ENCODE measurements at regions of chr12 and their contacts with region 1.

Region 1: DNA sequence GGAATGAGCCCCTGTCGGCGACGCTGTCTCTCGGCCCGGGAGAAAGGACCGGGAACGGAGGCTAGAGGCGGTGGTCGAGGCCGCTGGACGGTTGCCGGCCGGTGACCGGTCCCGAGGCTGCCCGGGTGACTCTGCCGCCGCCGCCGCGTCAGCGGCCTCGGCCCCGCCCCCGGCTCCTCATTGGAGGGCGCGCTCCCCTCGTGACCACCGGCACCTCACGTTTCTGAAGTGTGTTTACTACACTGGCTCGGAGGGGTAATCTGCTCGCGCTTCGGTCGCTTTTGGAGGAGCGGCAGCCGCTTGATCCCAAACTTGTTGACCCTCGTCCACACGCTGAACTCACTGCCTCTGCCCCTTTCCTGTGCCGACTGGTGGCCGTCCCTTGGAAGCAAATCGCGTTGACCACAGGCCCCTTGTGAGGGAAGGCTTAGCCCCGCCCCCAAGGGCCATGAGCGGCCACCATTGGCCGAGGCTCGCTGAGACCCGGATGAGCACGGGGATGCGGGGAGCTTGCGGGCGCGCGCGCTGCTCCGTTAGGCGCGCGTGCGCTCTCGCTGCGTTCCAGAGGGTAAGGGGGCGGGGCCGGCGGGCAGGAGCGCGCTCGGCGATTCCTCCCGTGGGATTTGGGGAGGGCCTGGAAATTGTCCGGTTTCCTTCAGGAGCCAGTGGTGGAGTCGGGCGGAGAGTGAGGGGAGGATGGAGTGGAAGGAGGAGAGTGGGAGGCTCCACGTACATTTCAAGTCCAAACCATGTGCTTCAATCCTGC is at the start of gene CRY1:
- DNase-seq: peak; percentile 94 to 96
- H3K4me3 ChIP-seq: peak within 1 kb of the TSS; percentile 49
- H3K4me3 Mint-ChIP-seq: no peak within 1 kb of the TSS
- H3K27ac Mint-ChIP-seq: no peak within 1 kb of the TSS
- H3K4me1 ChIP-seq: peaks cover 11% of the 10 kb centered on the region; the same call in 1 of the 2 replicates
- H3K4me1 Mint-ChIP-seq: peaks cover 7% of the 10 kb centered on the region
- H3K27me3 ChIP-seq: no peaks in the 10 kb centered on the region
- H3K27me3 Mint-ChIP-seq: no peaks in the 10 kb centered on the region
- CTCF ChIP-seq: no peak
- total RNA-seq, gene CRY1: 19.4 and 22.2 TPM in 2 replicates

Region 2: DNA sequence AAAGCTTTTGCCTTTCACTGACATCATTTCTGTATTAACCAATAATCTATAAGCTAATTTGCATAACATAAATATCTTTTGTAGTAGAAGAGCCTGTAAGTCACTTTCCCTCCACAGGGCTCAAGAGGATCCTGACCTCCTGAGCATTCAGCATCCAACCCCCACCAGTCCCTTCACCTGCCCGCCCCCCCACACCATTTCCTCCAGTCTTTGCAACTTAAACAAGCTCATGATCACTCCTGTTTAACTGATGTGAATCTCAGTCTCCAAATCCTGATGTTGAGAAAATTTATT is 11.8 kb after region 1 on chr12:
- CTCF ChIA-PET with region 1: interaction called, 12 read pairs
- POLR2A ChIA-PET with region 1: interaction called, 3 read pairs
- intact Hi-C with region 1: loop called (anchors 1 kb)
- DNase-seq: no peak
- H3K4me3 ChIP-seq: no peak overlapping the region
- H3K4me3 Mint-ChIP-seq: no peak overlapping the region
- H3K27ac Mint-ChIP-seq: no peak overlapping the region
- H3K4me1 ChIP-seq: peaks cover 5% of the 10 kb centered on the region; the same call in 1 of the 2 replicates
- H3K4me1 Mint-ChIP-seq: no peaks in the 10 kb centered on the region
- H3K27me3 ChIP-seq: no peaks in the 10 kb centered on the region
- H3K27me3 Mint-ChIP-seq: peaks cover 10% of the 10 kb centered on the region
- CTCF ChIP-seq: no peak

Region 3: GRCh38 chr12:107859367-107859766 is 765.8 kb after region 1 on chr12:
- CTCF ChIA-PET with region 1: no interaction called
- POLR2A ChIA-PET with region 1: no interaction called
- intact Hi-C with region 1: no loop called
- DNase-seq: no peak
- H3K4me3 ChIP-seq: no peak overlapping the region
- H3K4me3 Mint-ChIP-seq: no peak overlapping the region
- H3K27ac Mint-ChIP-seq: no peak overlapping the region
- H3K4me1 ChIP-seq: no peaks in the 10 kb centered on the region
- H3K4me1 Mint-ChIP-seq: no peaks in the 10 kb centered on the region
- H3K27me3 ChIP-seq: no peaks in the 10 kb centered on the region
- H3K27me3 Mint-ChIP-seq: peaks cover 32% of the 10 kb centered on the region
- CTCF ChIP-seq: no peak

Measured in Caco-2 (cell line).